ENCODE measurements at regions of chr19 and their contacts with region 1.

Region 1: GRCh38 chr19:3336680-3337523 is 29.5 kb upstream of the NFIC start:
- DNase-seq: no peak
- ATAC-seq: no peak
- H3K4me3 Mint-ChIP-seq: no peak overlapping the region
- H3K27ac Mint-ChIP-seq: peak overlapping the region in 1 of 10 donors; percentile 40
- H3K4me1 Mint-ChIP-seq: peaks cover 5 to 36% (median 13%) of the 10 kb centered on the region in 4 donors
- H3K27me3 Mint-ChIP-seq: peaks cover 0 to 3% (median 0%) of the 10 kb centered on the region in 5 donors

Region 2: DNA sequence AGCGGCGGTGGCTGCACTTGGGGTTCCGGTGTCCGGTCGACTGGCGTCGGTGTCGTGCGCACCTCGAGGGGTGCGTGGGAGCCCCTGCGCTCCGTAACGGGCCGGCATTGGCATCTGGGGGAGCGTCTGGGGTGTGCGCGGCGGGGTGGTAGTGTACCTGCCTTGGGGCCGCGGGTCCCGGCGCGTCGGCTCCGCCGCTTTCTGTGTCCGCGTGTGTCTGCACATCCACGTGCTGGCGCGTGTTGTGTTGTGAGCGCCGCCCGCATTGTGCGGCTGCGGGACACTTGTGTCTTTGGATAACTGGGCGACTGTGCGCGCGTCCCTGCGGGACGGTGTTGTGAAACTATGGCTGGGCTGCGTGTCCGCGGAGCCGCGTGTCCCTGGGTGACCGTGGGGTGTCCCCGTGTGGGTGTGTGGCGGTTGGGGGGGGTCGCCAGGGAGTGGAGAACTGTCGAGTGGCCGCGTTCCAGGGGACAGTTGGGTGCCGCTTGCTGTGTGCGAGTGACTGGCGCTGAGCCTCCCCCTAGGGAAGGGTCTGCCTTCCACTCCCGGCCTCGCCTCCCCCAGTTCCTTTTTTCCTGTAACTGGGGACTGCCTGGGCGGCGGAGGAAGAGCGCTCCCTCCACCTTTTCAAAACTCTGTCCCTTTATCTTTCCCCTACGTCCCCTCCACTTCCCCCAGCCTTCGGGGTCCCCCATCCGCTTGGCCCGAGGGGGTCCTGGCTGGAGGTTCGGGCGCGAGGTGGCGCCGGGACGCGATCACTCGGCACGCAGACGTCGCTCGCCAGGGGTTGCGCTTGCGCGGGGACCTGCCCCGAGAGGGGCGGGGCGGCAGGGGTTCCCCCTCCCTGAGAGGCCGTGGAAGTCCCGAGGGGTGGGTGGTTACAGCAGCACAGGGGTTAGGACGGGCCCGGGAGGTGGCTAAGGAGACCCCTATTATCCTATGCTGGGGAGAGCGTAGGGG is 23.8 kb after region 1 on chr19:
- POLR2A ChIA-PET with region 1: interaction called, 24 read pairs
- DNase-seq: peak; percentile 58 to 87 (median 73)
- ATAC-seq: peak; percentile 56 to 59
- H3K4me3 Mint-ChIP-seq: peak overlapping the region; percentile 82 to 93 (median 89)
- H3K27ac Mint-ChIP-seq: peak overlapping the region in 8 of 10 donors; percentile 79 to 95 (median 90)
- H3K4me1 Mint-ChIP-seq: peaks cover 28 to 59% (median 50%) of the 10 kb centered on the region in 4 donors
- H3K27me3 Mint-ChIP-seq: no peaks in the 10 kb centered on the region

Region 3: DNA sequence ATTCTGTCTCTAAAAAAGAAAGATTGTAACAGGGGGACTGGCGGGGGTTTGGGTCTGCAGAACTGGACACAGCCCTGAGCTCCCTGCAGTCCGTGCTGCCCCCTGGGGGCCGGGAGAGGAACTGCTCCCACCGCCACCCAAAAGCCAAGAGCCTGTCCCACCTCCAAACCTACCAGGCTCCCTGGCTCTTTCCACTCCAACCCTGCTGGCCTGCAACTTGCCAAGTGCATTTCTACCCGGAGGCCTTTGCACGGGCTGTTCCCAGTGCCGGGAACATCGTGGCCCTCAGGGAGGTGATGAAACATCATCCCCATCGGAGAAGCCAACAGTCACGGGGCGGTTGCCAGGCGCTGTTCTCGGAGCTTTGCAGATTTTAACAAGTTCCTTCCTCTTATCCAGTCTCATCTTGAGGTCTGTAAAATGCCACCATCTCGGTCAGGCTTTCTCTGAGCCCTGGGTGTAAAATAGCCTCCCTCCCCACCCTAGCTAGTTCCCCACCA is 92.7 kb after region 1 on chr19:
- POLR2A ChIA-PET with region 1: interaction called, 11 read pairs
- DNase-seq: peak; percentile 55 to 88 (median 75)
- ATAC-seq: peak; percentile 68 to 84
- H3K4me3 Mint-ChIP-seq: no peak overlapping the region
- H3K27ac Mint-ChIP-seq: no peak overlapping the region
- H3K4me1 Mint-ChIP-seq: peaks cover 11 to 12% (median 12%) of the 10 kb centered on the region in 4 donors
- H3K27me3 Mint-ChIP-seq: no peaks in the 10 kb centered on the region

Measured in naive thymus-derived CD8-positive, alpha-beta T cell (primary cell).